Activated CD8-positive, alpha-beta T cell treated with anti-CD3 and anti-CD28 coated beads for 36 hours (primary cell): ENCODE measurements at regions of chr3 and their contacts with region 1.

Region 1: DNA sequence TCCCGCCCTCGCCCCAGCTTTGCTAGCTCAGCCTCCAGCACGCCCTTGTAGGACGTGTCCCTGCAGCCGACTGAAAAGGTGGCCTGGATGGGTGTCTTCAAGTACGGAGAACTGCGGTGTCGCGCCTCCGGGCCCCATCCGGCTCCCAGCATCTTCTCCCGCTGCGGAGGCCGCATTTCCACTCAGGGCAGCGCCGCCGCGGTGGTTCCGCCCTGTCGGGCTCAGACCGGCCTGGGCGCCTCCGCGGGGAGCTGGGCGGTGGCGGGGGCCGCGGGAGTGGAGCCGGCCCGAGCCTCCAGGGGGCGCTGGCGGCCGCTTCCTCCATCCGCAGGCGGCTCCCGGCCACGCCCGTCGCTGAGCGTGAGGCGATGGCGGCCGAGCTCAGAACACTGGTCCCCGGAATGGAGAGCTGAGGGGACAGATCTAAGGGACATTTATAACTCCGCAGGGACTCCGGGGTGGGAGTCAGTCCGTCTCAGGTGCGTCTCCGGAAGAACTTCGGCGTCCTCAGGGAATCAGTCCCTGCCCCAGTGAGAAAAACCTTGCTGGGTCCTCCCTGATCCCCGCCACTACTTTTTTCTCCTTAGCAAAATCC is 13.6 kb upstream of the SMCO1 start:
- DNase-seq: peak; percentile 86
- ATAC-seq: peak; percentile 98
- H3K4me3 Mint-ChIP-seq: peak overlapping the region; percentile 66
- H3K27ac Mint-ChIP-seq: peak overlapping the region; percentile 49
- H3K4me1 Mint-ChIP-seq: peaks cover 6% of the 10 kb centered on the region
- H3K27me3 Mint-ChIP-seq: peaks cover 11% of the 10 kb centered on the region
- CTCF ChIP-seq: peak; percentile 89

Region 2: DNA sequence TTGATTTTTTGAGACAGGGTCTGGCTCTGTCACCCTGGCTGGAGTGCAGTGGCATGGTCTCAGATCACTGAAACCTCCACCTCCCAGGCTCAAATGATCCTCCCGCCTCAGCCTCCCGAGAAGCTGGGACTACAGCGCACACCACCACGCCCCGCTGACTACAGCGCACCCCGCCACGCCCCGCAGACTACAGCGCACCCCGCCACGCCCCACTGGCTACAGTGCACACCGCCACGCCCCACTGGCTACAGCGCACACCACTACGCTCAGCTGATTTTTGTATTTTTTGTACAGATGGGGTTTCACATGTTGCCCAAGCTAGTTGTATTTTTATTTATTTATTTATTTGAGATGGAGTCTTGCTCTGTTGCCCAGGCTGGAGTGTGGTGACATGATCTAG is 276.8 kb before region 1 on chr3:
- CTCF ChIA-PET with region 1: interaction called, 50 read pairs
- POLR2A ChIA-PET with region 1: no interaction called
- intact Hi-C with region 1: no loop called
- DNase-seq: no peak
- ATAC-seq: no peak
- H3K4me3 Mint-ChIP-seq: no peak overlapping the region
- H3K27ac Mint-ChIP-seq: no peak overlapping the region
- H3K4me1 Mint-ChIP-seq: peaks cover 2% of the 10 kb centered on the region
- H3K27me3 Mint-ChIP-seq: no peaks in the 10 kb centered on the region
- CTCF ChIP-seq: no peak

Region 3: DNA sequence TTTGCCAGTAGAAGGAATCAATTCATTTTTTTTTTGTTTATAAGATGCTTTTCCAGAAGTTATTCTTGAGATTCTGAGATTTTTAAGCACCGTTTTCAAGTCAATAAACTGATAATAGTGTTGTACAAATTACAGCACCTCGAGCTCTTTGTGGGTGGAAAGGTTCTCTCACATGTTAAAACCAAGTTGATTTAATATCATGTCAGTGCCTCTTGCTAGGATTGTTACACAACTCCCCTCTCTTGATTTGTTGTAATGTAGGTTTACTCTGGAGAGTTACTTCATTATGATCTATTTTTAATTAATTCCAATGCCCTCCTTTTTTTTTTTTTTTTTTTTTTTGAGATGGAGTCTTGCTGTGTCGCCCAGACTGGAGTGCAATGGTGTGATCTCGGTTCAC is 70.7 kb before region 1 on chr3:
- CTCF ChIA-PET with region 1: interaction called, 10 read pairs
- POLR2A ChIA-PET with region 1: no interaction called
- intact Hi-C with region 1: no loop called
- DNase-seq: no peak
- ATAC-seq: no peak
- H3K4me3 Mint-ChIP-seq: no peak overlapping the region
- H3K27ac Mint-ChIP-seq: no peak overlapping the region
- H3K4me1 Mint-ChIP-seq: peaks cover 15% of the 10 kb centered on the region
- H3K27me3 Mint-ChIP-seq: no peaks in the 10 kb centered on the region
- CTCF ChIP-seq: no peak

Region 4: GRCh38 chr3:196486263-196486662 is 42.5 kb before region 1 on chr3:
- CTCF ChIA-PET with region 1: interaction called, 50 read pairs
- POLR2A ChIA-PET with region 1: no interaction called
- intact Hi-C with region 1: no loop called
- DNase-seq: peak; percentile 43
- ATAC-seq: no peak
- H3K4me3 Mint-ChIP-seq: no peak overlapping the region
- H3K27ac Mint-ChIP-seq: no peak overlapping the region
- H3K4me1 Mint-ChIP-seq: peaks cover 7% of the 10 kb centered on the region
- H3K27me3 Mint-ChIP-seq: no peaks in the 10 kb centered on the region
- CTCF ChIP-seq: peak; percentile 56

Region 5: GRCh38 chr3:196502775-196503195 is 26.0 kb before region 1 on chr3:
- CTCF ChIA-PET with region 1: interaction called, 39 read pairs
- POLR2A ChIA-PET with region 1: interaction called, 4 read pairs
- intact Hi-C with region 1: no loop called
- DNase-seq: peak; percentile 81
- ATAC-seq: peak; percentile 41
- H3K4me3 Mint-ChIP-seq: peak overlapping the region; percentile 100
- H3K27ac Mint-ChIP-seq: peak overlapping the region; percentile 100
- H3K4me1 Mint-ChIP-seq: peaks cover 34% of the 10 kb centered on the region
- H3K27me3 Mint-ChIP-seq: no peaks in the 10 kb centered on the region
- CTCF ChIP-seq: no peak

Region 6: DNA sequence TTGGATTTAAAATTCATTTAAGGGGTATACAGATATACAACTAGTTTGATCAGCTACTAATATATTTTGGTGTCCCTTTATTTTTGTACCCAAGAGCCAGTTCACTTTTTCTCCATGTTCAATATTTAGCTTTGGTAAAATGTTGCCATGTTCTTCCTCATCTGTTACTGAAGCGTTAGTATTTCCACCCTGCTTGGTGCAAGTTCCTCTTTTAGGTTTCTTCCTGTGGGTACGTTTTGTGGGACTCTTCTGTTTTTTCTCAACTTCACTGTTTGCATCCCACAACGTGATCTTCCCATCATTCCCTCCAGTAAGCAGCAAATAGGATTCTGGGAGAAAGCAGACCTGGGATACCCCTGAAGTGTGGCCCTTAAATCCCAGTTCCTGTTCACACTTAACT is 25.5 kb after region 1 on chr3:
- CTCF ChIA-PET with region 1: interaction called, 26 read pairs
- POLR2A ChIA-PET with region 1: no interaction called
- intact Hi-C with region 1: no loop called
- DNase-seq: no peak
- ATAC-seq: no peak
- H3K4me3 Mint-ChIP-seq: no peak overlapping the region
- H3K27ac Mint-ChIP-seq: no peak overlapping the region
- H3K4me1 Mint-ChIP-seq: peaks cover 4% of the 10 kb centered on the region
- H3K27me3 Mint-ChIP-seq: no peaks in the 10 kb centered on the region
- CTCF ChIP-seq: no peak

Region 7: DNA sequence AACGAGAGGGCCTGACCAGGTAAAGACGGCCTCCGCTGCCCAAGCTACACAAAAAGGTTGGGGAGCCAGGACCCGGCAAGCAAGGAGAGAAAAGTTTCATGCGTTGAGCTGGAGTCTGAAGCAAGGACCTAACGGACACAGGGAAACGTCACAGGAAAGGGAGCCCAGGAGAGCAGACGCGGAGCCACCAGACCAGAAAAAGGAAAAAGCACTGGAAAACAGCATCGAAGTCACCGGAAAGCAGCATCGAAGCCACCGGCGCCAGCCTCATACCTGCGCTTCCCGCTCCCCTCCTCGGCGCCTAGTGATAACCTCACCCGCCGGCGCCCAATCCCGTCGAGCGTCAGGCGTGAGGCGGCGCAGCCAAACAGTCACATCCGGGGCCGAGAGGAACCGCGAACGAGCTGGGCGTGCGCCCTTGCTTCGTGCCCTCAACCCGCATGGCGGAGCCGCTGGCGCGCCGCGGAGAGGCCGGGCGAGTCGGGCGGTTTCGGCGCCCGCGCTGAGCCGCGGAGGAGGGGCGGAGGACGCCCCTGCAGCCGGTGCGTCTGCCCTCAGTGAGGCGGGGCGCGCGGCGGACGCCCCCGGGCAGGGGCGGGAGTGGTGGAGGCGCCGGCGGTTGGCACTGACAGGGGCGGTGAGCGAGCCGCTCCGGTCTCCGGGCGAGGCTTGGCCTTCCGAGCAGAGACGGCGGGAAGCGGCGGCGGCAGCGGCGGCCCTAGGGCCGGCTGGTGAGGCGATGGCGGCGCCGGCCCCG is 39.7 kb after region 1 on chr3 and contains the starts of genes FBXO45 and WDR53:
- CTCF ChIA-PET with region 1: interaction called, 19 read pairs
- POLR2A ChIA-PET with region 1: interaction called, 5 read pairs
- intact Hi-C with region 1: no loop called
- DNase-seq: peak; percentile 96
- ATAC-seq: peak; percentile 96
- H3K4me3 Mint-ChIP-seq: peak within 1 kb of the TSS; percentile 84
- H3K27ac Mint-ChIP-seq: peak within 1 kb of the TSS; percentile 97
- H3K4me1 Mint-ChIP-seq: peaks cover 31% of the 10 kb centered on the region
- H3K27me3 Mint-ChIP-seq: no peaks in the 10 kb centered on the region
- CTCF ChIP-seq: no peak
- total RNA-seq, gene FBXO45: 18.2 TPM
- total RNA-seq, gene WDR53: 16.2 to 17.2 TPM